ENCODE measurements at regions of chr11 and their contacts with region 1.

Region 1: DNA sequence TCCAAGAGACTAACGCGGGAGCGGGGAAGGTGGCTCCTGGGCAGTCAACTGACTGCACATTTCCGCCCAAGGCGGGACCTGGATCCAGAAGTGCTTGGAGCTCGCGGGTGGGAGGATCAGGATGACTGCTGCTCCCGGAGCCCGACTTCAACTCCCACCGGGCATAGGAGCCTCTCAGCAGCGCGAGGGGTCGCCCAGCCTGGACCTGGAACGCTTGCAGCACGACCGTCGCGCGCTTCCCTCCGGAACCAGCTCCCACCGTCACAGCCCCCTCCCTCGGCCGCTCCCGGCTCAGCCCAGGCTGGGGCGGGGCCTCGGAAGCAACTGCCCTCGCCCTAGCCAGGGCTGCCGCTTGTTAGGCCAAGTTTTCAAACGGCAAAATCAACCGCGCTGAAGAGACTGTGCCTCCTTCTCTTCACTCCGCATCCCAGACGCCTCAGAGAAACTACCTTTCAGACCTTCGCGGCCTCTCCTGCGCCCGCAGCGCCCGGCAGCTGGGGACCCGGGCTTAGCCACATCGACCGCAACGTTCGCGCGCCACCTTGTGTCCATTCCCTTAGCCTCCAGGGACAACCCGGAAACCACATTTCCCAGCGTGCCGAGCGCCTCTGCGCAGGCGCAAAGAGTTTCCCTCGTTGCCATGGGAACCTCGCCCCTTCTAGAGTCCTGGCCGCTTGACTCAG is 14.0 kb downstream of the SSH3 start:
- DNase-seq: peak; percentile 96 to 99 (median 97)
- H3K4me3 ChIP-seq: peak overlapping the region; percentile 91
- H3K4me3 Mint-ChIP-seq: peak overlapping the region; percentile 94 to 99 (median 98)
- H3K27ac ChIP-seq: peak overlapping the region; percentile 69
- H3K27ac Mint-ChIP-seq: peak overlapping the region; percentile 95 to 99 (median 98)
- H3K4me1 ChIP-seq: peaks cover 35% of the 10 kb centered on the region
- H3K4me1 Mint-ChIP-seq: peaks cover 27 to 49% (median 40%) of the 10 kb centered on the region in 4 donors
- H3K27me3 ChIP-seq: no peaks in the 10 kb centered on the region
- H3K27me3 Mint-ChIP-seq: no peaks in the 10 kb centered on the region

Region 2: GRCh38 chr11:67057309-67057686 is 260.0 kb before region 1 on chr11:
- CTCF ChIA-PET with region 1: no interaction called
- POLR2A ChIA-PET with region 1: no interaction called
- intact Hi-C with region 1: no loop called
- DNase-seq: no peak
- H3K4me3 ChIP-seq: no peak overlapping the region
- H3K4me3 Mint-ChIP-seq: peak overlapping the region; percentile 39 to 76 (median 63)
- H3K27ac ChIP-seq: no peak overlapping the region
- H3K27ac Mint-ChIP-seq: no peak overlapping the region
- H3K4me1 ChIP-seq: peaks cover 7% of the 10 kb centered on the region
- H3K4me1 Mint-ChIP-seq: peaks cover 4 to 13% (median 10%) of the 10 kb centered on the region in 4 donors
- H3K27me3 ChIP-seq: no peaks in the 10 kb centered on the region
- H3K27me3 Mint-ChIP-seq: peaks cover 0 to 2% of the 10 kb centered on the region in 2 donors

Region 3: GRCh38 chr11:67118801-67119584 is 198.4 kb before region 1 on chr11 and contains the start of gene KDM2A:
- CTCF ChIA-PET with region 1: no interaction called
- POLR2A ChIA-PET with region 1: interaction called, 4 read pairs
- intact Hi-C with region 1: loop called (anchors 1 kb)
- DNase-seq: peak; percentile 96 to 100 (median 98)
- H3K4me3 ChIP-seq: peak within 1 kb of the TSS; percentile 60 to 97
- H3K4me3 Mint-ChIP-seq: peak within 1 kb of the TSS; percentile 94 to 99 (median 97)
- H3K27ac ChIP-seq: peak within 1 kb of the TSS; percentile 76
- H3K27ac Mint-ChIP-seq: peak within 1 kb of the TSS; percentile 89 to 98 (median 96)
- H3K4me1 ChIP-seq: peaks cover 31% of the 10 kb centered on the region
- H3K4me1 Mint-ChIP-seq: peaks cover 13 to 40% (median 27%) of the 10 kb centered on the region in 4 donors
- H3K27me3 ChIP-seq: no peaks in the 10 kb centered on the region
- H3K27me3 Mint-ChIP-seq: no peaks in the 10 kb centered on the region
- total RNA-seq, gene KDM2A: 193 to 200 TPM

Region 4: GRCh38 chr11:67252831-67253239 is 64.5 kb before region 1 on chr11:
- CTCF ChIA-PET with region 1: interaction called, 10 read pairs
- POLR2A ChIA-PET with region 1: interaction called, 9 read pairs
- intact Hi-C with region 1: no loop called
- DNase-seq: peak; percentile 26 to 46 (median 40)
- H3K4me3 ChIP-seq: no peak overlapping the region
- H3K4me3 Mint-ChIP-seq: peak overlapping the region in 3 of 8 donors; percentile 6 to 59 (median 39)
- H3K27ac ChIP-seq: no peak overlapping the region
- H3K27ac Mint-ChIP-seq: peak overlapping the region in 6 of 7 donors; percentile 7 to 78 (median 32)
- H3K4me1 ChIP-seq: peaks cover 15% of the 10 kb centered on the region
- H3K4me1 Mint-ChIP-seq: peaks cover 10 to 52% (median 32%) of the 10 kb centered on the region in 4 donors
- H3K27me3 ChIP-seq: no peaks in the 10 kb centered on the region
- H3K27me3 Mint-ChIP-seq: no peaks in the 10 kb centered on the region

Region 5: GRCh38 chr11:67277231-67277961 is 40.0 kb before region 1 on chr11:
- CTCF ChIA-PET with region 1: interaction called, 54 read pairs
- POLR2A ChIA-PET with region 1: interaction called, 358 read pairs
- intact Hi-C with region 1: no loop called
- DNase-seq: peak; percentile 92 to 96 (median 93)
- H3K4me3 ChIP-seq: peak overlapping the region; percentile 63 to 71
- H3K4me3 Mint-ChIP-seq: peak overlapping the region; percentile 79 to 92 (median 83)
- H3K27ac ChIP-seq: peak overlapping the region; percentile 95
- H3K27ac Mint-ChIP-seq: peak overlapping the region; percentile 94 to 99 (median 97)
- H3K4me1 ChIP-seq: peaks cover 98% of the 10 kb centered on the region
- H3K4me1 Mint-ChIP-seq: peaks cover 25 to 90% (median 54%) of the 10 kb centered on the region in 4 donors
- H3K27me3 ChIP-seq: no peaks in the 10 kb centered on the region
- H3K27me3 Mint-ChIP-seq: no peaks in the 10 kb centered on the region

Region 6: DNA sequence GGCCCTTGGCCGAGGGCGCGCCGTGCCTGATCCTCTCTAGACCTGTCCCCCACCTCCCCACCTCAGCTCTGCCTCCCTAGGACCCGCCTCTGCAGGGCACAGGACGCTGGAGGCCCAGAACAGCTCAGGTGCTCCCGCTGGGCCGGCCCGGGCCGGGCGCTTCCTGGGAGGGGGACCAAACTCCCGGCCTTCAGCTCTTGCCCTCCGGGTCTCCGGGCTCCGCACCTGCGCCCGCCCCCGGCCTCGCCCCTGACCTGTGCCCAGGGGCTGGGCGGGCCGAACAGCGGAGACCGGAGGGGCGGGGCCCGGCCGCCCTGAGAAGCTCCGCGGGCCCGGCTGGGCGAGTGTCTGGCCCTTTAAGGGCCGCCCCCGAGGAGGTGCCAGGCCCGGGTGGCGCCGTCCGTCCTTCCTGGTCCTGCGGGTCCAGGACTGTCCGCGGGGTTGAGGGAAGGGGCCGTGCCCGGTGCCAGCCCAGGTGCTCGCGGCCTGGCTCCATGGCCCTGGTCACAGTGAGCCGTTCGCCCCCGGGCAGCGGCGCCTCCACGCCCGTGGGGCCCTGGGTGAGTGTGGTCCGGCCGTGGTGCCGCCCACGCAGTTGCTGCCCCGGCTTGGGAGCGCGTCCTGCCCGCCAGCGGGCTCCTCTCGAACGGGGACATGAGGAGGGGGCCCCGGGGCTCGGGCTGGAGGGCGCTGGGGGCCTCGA is 14.1 kb before region 1 on chr11 and contains the start of gene SSH3:
- CTCF ChIA-PET with region 1: interaction called, 8 read pairs
- POLR2A ChIA-PET with region 1: interaction called, 95 read pairs
- intact Hi-C with region 1: loop called (anchors 2 kb)
- DNase-seq: peak in 3 of 5 donors; percentile 19 to 42 (median 28)
- H3K4me3 ChIP-seq: peak within 1 kb of the TSS in 1 of 2 donors; percentile 66
- H3K4me3 Mint-ChIP-seq: peak within 1 kb of the TSS; percentile 48 to 80 (median 70)
- H3K27ac ChIP-seq: peak within 1 kb of the TSS; percentile 68
- H3K27ac Mint-ChIP-seq: peak within 1 kb of the TSS in 6 of 7 donors; percentile 47 to 72 (median 64)
- H3K4me1 ChIP-seq: peaks cover 20% of the 10 kb centered on the region
- H3K4me1 Mint-ChIP-seq: peaks cover 7 to 31% (median 14%) of the 10 kb centered on the region in 4 donors
- H3K27me3 ChIP-seq: no peaks in the 10 kb centered on the region
- H3K27me3 Mint-ChIP-seq: no peaks in the 10 kb centered on the region
- total RNA-seq, gene SSH3: 22.5 to 26.3 TPM

Region 7: GRCh38 chr11:67373925-67374618 is 56.7 kb after region 1 on chr11:
- CTCF ChIA-PET with region 1: no interaction called
- POLR2A ChIA-PET with region 1: interaction called, 10 read pairs
- intact Hi-C with region 1: no loop called
- DNase-seq: peak in 3 of 5 donors; percentile 49 to 73 (median 51)
- H3K4me3 ChIP-seq: peak overlapping the region; percentile 34 to 63
- H3K4me3 Mint-ChIP-seq: peak overlapping the region; percentile 73 to 95 (median 86)
- H3K27ac ChIP-seq: peak overlapping the region; percentile 38
- H3K27ac Mint-ChIP-seq: peak overlapping the region; percentile 57 to 97 (median 87)
- H3K4me1 ChIP-seq: peaks cover 53% of the 10 kb centered on the region
- H3K4me1 Mint-ChIP-seq: peaks cover 36 to 67% (median 42%) of the 10 kb centered on the region in 4 donors
- H3K27me3 ChIP-seq: no peaks in the 10 kb centered on the region
- H3K27me3 Mint-ChIP-seq: peaks cover 4% of the 10 kb centered on the region in 2 donors

Measured in CD4-positive, alpha-beta memory T cell (primary cell).